Endothelial cell of umbilical vein (primary cell): ENCODE measurements at regions of chr3 and their contacts with region 1.

Region 1: DNA sequence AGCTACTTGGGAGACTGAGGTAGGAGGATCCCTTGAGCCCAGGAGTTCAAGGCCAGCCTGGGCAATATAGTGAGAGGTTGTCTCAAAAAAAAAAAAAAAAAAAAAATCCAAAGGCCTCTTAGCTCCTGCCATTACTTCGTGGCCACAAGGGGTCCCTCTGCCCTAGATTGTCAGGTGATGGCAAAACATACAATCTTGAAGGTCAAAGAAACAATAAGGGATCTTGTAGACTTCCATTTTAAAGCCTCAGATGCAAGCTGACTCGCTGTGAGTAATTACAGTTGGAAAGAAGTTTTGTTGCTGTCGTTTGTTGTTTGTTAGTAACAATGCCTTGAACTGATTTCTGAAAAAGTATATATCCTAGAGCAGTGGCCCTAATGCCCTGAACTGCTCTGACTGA is 55.9 kb upstream of the PLCL2 start:
- DNase-seq: peak; percentile 80
- H3K4me3 ChIP-seq: no peak overlapping the region
- H3K27ac ChIP-seq: peak overlapping the region; percentile 63
- H3K4me1 ChIP-seq: peaks cover 6% of the 10 kb centered on the region
- H3K27me3 ChIP-seq: no peaks in the 10 kb centered on the region
- CTCF ChIP-seq: peak; percentile 63 to 66
- POLR2A ChIP-seq: no peak

Region 2: DNA sequence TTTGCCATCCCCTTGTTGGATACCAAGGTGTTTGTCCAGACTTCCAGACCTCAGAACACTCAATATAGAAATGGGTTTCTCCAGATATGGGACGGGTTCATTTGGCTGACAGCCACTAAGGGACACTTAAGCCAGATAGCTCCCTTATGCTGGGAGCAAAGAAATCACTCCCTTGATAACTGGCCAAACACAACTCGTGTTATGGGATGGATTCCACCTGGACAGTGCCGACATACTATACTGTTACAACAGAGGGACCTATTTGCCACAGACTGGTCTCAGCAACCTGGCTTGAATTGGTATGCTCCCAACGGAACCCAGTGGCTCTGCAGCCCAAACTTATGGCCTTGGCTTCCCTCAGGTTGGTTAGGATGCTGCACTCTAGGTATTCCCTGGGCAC is 58.0 kb before region 1 on chr3:
- CTCF ChIA-PET with region 1: no interaction called
- POLR2A ChIA-PET with region 1: no interaction called
- dilution Hi-C with region 1: no loop called
- intact Hi-C with region 1: no loop called
- DNase-seq: no peak
- H3K4me3 ChIP-seq: no peak overlapping the region
- H3K27ac ChIP-seq: no peak overlapping the region
- H3K4me1 ChIP-seq: no peaks in the 10 kb centered on the region
- H3K27me3 ChIP-seq: no peaks in the 10 kb centered on the region
- CTCF ChIP-seq: no peak
- POLR2A ChIP-seq: no peak

Region 3: GRCh38 chr3:16864610-16865313 is 35.9 kb after region 1 on chr3:
- CTCF ChIA-PET with region 1: interaction called, 6 read pairs
- POLR2A ChIA-PET with region 1: no interaction called
- dilution Hi-C with region 1: no loop called
- intact Hi-C with region 1: loop called (anchors 2 kb)
- DNase-seq: peak; percentile 88
- H3K4me3 ChIP-seq: peak overlapping the region in 2 of 3 experiments; percentile 6 to 41
- H3K27ac ChIP-seq: peak overlapping the region; percentile 75
- H3K4me1 ChIP-seq: peaks cover 23% of the 10 kb centered on the region
- H3K27me3 ChIP-seq: no peaks in the 10 kb centered on the region
- CTCF ChIP-seq: no peak
- POLR2A ChIP-seq: no peak

Region 4: GRCh38 chr3:16945330-16945729 is 116.5 kb after region 1 on chr3:
- CTCF ChIA-PET with region 1: interaction called, 7 read pairs
- POLR2A ChIA-PET with region 1: no interaction called
- dilution Hi-C with region 1: no loop called
- intact Hi-C with region 1: loop called (anchors 1 kb)
- DNase-seq: peak; percentile 58
- H3K4me3 ChIP-seq: no peak overlapping the region
- H3K27ac ChIP-seq: no peak overlapping the region
- H3K4me1 ChIP-seq: no peaks in the 10 kb centered on the region
- H3K27me3 ChIP-seq: no peaks in the 10 kb centered on the region
- CTCF ChIP-seq: no peak
- POLR2A ChIP-seq: no peak

Region 5: DNA sequence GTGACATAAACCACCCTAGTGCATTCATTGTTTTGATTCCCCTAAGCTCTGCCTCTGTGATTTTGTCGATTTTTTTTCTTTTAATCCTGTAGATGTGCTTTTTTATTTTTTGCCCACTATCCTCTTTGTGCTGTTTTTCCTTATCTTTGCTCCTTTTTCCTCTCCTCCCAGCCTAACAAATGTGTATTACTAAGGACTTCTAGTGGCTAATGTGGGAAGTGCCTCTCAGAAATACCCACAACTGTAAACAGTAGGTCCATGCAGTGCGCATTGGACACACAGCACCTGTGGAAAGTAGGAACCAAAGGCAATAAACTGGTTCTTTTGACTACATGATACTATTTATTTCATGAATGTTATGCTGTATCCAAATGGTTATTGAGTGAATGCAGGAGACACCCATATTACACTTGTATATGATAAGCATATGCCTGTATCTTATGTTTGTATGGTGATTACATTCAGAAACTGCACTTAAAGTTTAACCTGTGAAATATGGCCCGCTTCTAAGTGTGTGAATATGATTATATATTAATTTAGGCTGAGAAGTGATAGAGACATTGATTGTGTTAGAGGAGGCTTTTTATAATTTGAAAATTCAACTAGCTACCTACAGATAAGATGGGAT is 203.7 kb after region 1 on chr3:
- CTCF ChIA-PET with region 1: interaction called, 36 read pairs
- POLR2A ChIA-PET with region 1: no interaction called
- dilution Hi-C with region 1: no loop called
- intact Hi-C with region 1: loop called (anchors 1 kb)
- DNase-seq: peak; percentile 58
- H3K4me3 ChIP-seq: no peak overlapping the region
- H3K27ac ChIP-seq: no peak overlapping the region
- H3K4me1 ChIP-seq: no peaks in the 10 kb centered on the region
- H3K27me3 ChIP-seq: no peaks in the 10 kb centered on the region
- CTCF ChIP-seq: peak; percentile 35 to 55
- POLR2A ChIP-seq: no peak

Region 6: DNA sequence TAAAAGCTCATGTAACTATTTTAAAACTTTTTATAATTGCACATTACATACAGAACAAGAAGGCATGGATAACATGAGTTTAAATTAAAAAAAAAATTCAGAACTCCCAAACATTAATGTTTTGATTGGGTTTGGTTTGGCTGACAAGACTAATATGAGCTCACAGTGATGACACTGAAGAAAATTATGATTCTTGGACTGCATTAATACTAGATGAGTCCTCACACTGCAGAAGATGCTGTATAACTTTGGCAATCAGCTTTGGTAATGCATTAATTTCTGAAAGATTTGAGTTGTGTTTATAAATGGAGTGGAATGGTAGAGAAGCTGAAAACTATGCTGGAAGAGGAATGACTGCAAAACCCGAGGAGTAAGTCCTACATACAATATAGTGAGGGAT is 414.8 kb after region 1 on chr3:
- CTCF ChIA-PET with region 1: interaction called, 12 read pairs
- POLR2A ChIA-PET with region 1: no interaction called
- dilution Hi-C with region 1: no loop called
- intact Hi-C with region 1: no loop called
- DNase-seq: no peak
- H3K4me3 ChIP-seq: no peak overlapping the region
- H3K27ac ChIP-seq: no peak overlapping the region
- H3K4me1 ChIP-seq: no peaks in the 10 kb centered on the region
- H3K27me3 ChIP-seq: no peaks in the 10 kb centered on the region
- CTCF ChIP-seq: no peak
- POLR2A ChIP-seq: no peak